Ovary (tissue), 10 donors: ENCODE measurements at regions of chr22 and their contacts with region 1.

Region 1: GRCh38 chr22:31995046-31995445 is 48.0 kb upstream of the SLC5A1 start:
- DNase-seq: no peak
- H3K4me3 ChIP-seq: no peak overlapping the region
- H3K27ac ChIP-seq: no peak overlapping the region
- H3K4me1 ChIP-seq: no peaks in the 10 kb centered on the region
- H3K27me3 ChIP-seq: no peaks in the 10 kb centered on the region
- CTCF ChIP-seq: no peak
- EP300 ChIP-seq: no peak
- POLR2A ChIP-seq: no peak

Region 2: DNA sequence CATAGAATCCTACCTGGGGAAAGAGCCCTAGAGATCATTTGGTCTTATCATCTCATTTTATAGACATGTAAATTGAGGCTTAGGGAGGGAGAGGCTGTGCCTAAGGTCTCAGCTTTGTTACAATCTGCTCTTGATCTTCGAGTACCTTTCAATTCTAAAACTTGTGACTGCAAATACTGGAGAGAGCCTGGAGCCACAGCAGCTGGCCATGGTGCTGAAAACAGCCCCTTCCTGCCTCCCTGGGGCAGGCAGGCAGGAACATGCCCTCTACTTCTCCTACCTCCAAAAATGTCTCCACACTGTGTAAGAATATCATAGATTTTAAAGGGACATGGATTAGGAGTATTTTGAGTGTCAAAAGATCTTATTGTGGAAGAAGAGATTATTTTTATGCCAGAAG is 111.9 kb after region 1 on chr22:
- intact Hi-C with region 1: no loop called
- DNase-seq: no peak
- H3K4me3 ChIP-seq: no peak overlapping the region
- H3K27ac ChIP-seq: no peak overlapping the region
- H3K4me1 ChIP-seq: no peaks in the 10 kb centered on the region
- H3K27me3 ChIP-seq: no peaks in the 10 kb centered on the region
- CTCF ChIP-seq: no peak
- EP300 ChIP-seq: no peak
- POLR2A ChIP-seq: no peak

Region 3: GRCh38 chr22:32237906-32238305 is 242.9 kb after region 1 on chr22:
- intact Hi-C with region 1: loop called in 1 of 4 experiments (anchors 10 kb)
- DNase-seq: no peak
- H3K4me3 ChIP-seq: no peak overlapping the region
- H3K27ac ChIP-seq: no peak overlapping the region
- H3K4me1 ChIP-seq: no peaks in the 10 kb centered on the region
- H3K27me3 ChIP-seq: no peaks in the 10 kb centered on the region
- CTCF ChIP-seq: no peak
- EP300 ChIP-seq: no peak
- POLR2A ChIP-seq: no peak